Calu3 (cell line): ENCODE measurements at regions of chr7 and their contacts with region 1.

Region 1: GRCh38 chr7:69962186-69963065 is 364.2 kb downstream of the AUTS2 start:
- DNase-seq: no peak
- H3K4me3 Mint-ChIP-seq: no peak overlapping the region
- H3K27ac Mint-ChIP-seq: no peak overlapping the region
- H3K4me1 Mint-ChIP-seq: no peaks in the 10 kb centered on the region
- H3K27me3 Mint-ChIP-seq: no peaks in the 10 kb centered on the region
- CTCF ChIP-seq: no peak

Region 2: GRCh38 chr7:69873512-69873911 is 88.9 kb before region 1 on chr7:
- CTCF ChIA-PET with region 1: interaction called, 10 read pairs
- intact Hi-C with region 1: no loop called
- DNase-seq: no peak
- H3K4me3 Mint-ChIP-seq: no peak overlapping the region
- H3K27ac Mint-ChIP-seq: no peak overlapping the region
- H3K4me1 Mint-ChIP-seq: no peaks in the 10 kb centered on the region
- H3K27me3 Mint-ChIP-seq: no peaks in the 10 kb centered on the region
- CTCF ChIP-seq: no peak

Region 3: DNA sequence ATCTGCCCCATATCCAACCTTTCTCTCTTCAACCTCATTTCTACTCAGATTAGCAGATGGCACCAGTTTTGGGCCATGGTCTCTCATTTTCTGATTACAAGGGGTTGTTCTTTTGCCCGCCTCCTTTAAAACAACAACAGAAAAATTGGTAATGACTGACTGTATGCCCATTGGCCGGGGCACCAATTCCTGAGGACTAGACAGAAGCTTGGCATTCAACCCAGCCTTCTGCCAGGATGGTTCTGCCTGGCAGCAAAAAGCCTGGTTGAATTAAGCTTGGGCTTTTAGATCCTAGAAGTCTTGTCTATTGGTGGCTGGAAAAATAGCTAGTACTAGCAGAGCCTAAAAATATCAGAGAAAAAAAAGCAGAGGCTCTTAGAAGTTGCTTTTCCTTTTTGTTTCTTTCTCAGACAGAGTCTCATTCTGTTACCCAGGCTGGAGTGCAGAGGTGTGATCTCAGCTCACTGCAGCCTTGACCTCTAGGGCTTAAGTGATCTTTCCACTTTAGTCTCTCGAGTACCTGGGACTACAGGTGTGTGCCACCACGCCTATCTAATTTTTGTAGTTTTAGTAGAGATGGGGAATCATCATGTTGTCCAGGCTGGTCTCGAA is 38.4 kb after region 1 on chr7:
- CTCF ChIA-PET with region 1: no interaction called
- intact Hi-C with region 1: no loop called
- DNase-seq: no peak
- H3K4me3 Mint-ChIP-seq: no peak overlapping the region
- H3K27ac Mint-ChIP-seq: no peak overlapping the region
- H3K4me1 Mint-ChIP-seq: no peaks in the 10 kb centered on the region
- H3K27me3 Mint-ChIP-seq: no peaks in the 10 kb centered on the region
- CTCF ChIP-seq: no peak